ENCODE measurements at regions of chr11 and their contacts with region 1.

Region 1: GRCh38 chr11:3091791-3092602 is 34.8 kb upstream of the CARS1 start:
- DNase-seq: peak; percentile 38 to 79 (median 66)
- ATAC-seq: peak; percentile 87
- H3K4me3 ChIP-seq: no peak overlapping the region
- H3K4me3 Mint-ChIP-seq: no peak overlapping the region
- H3K27ac ChIP-seq: no peak overlapping the region
- H3K27ac Mint-ChIP-seq: peak overlapping the region in 1 of 9 donors; percentile 26
- H3K4me1 ChIP-seq: no peaks in the 10 kb centered on the region
- H3K4me1 Mint-ChIP-seq: peaks cover 0 to 16% (median 0%) of the 10 kb centered on the region in 7 donors
- H3K27me3 ChIP-seq: no peaks in the 10 kb centered on the region
- H3K27me3 Mint-ChIP-seq: peaks cover 0 to 4% (median 0%) of the 10 kb centered on the region in 5 donors

Region 2: GRCh38 chr11:2428322-2428795 is 663.6 kb before region 1 on chr11:
- CTCF ChIA-PET with region 1: interaction called, 3 read pairs
- POLR2A ChIA-PET with region 1: no interaction called
- intact Hi-C with region 1: loop called (anchors 1 to 5 kb)
- DNase-seq: peak; percentile 67 to 85 (median 79)
- ATAC-seq: peak; percentile 87
- H3K4me3 ChIP-seq: no peak overlapping the region
- H3K4me3 Mint-ChIP-seq: no peak overlapping the region
- H3K27ac ChIP-seq: no peak overlapping the region
- H3K27ac Mint-ChIP-seq: no peak overlapping the region
- H3K4me1 ChIP-seq: no peaks in the 10 kb centered on the region
- H3K4me1 Mint-ChIP-seq: peaks cover 0 to 4% (median 0%) of the 10 kb centered on the region in 7 donors
- H3K27me3 ChIP-seq: no peaks in the 10 kb centered on the region
- H3K27me3 Mint-ChIP-seq: no peaks in the 10 kb centered on the region

Region 3: DNA sequence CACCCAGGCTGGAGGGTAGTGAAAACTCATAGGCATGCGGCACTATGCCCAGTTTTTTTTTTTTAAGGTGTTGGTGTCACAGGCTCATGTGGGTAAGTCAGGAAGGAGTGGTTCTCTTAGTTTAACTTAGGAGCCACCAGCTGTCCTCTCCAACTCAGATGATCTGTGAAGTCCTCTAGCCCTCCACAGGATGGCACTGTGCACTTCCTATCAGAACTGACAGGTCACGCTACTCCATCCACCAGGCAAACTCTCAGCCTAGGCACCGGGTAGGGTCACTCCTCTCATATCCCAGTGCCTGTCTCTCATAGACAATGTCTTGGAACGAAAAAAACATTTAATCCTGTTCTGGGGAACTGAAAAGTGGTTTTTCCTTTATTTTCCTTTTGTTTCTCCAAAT is 116.4 kb before region 1 on chr11:
- CTCF ChIA-PET with region 1: interaction called, 35 read pairs
- POLR2A ChIA-PET with region 1: no interaction called
- intact Hi-C with region 1: loop called (anchors 1 kb)
- DNase-seq: peak in 8 of 9 donors; percentile 26 to 68 (median 48)
- ATAC-seq: peak; percentile 95
- H3K4me3 ChIP-seq: no peak overlapping the region
- H3K4me3 Mint-ChIP-seq: no peak overlapping the region
- H3K27ac ChIP-seq: no peak overlapping the region
- H3K27ac Mint-ChIP-seq: peak overlapping the region in 3 of 9 donors; percentile 24 to 66 (median 41)
- H3K4me1 ChIP-seq: peaks cover 0 to 7% of the 10 kb centered on the region in 2 donors
- H3K4me1 Mint-ChIP-seq: peaks cover 21 to 51% (median 37%) of the 10 kb centered on the region in 7 donors
- H3K27me3 ChIP-seq: no peaks in the 10 kb centered on the region
- H3K27me3 Mint-ChIP-seq: no peaks in the 10 kb centered on the region

Region 4: GRCh38 chr11:3037040-3037944 is 54.7 kb before region 1 on chr11:
- CTCF ChIA-PET with region 1: interaction called, 25 read pairs
- POLR2A ChIA-PET with region 1: no interaction called
- intact Hi-C with region 1: loop called (anchors 1 kb)
- DNase-seq: peak in 7 of 9 donors; percentile 9 to 43 (median 23)
- ATAC-seq: peak; percentile 72
- H3K4me3 ChIP-seq: no peak overlapping the region
- H3K4me3 Mint-ChIP-seq: peak overlapping the region in 1 of 10 donors; percentile 43
- H3K27ac ChIP-seq: no peak overlapping the region
- H3K27ac Mint-ChIP-seq: peak overlapping the region in 4 of 9 donors; percentile 18 to 87 (median 48)
- H3K4me1 ChIP-seq: peaks cover 3 to 7% of the 10 kb centered on the region in 2 donors
- H3K4me1 Mint-ChIP-seq: peaks cover 12 to 32% (median 18%) of the 10 kb centered on the region in 7 donors
- H3K27me3 ChIP-seq: no peaks in the 10 kb centered on the region
- H3K27me3 Mint-ChIP-seq: no peaks in the 10 kb centered on the region

Measured in naive thymus-derived CD4-positive, alpha-beta T cell (primary cell).